ENCODE measurements at regions of chr18 and their contacts with region 1.

Region 1: GRCh38 chr18:27005589-27005988 is 140.1 kb upstream of the AQP4 start:
- H3K4me3 Mint-ChIP-seq: no peak overlapping the region
- H3K27ac Mint-ChIP-seq: no peak overlapping the region
- H3K4me1 Mint-ChIP-seq: no peaks in the 10 kb centered on the region
- H3K27me3 Mint-ChIP-seq: peaks cover 2% of the 10 kb centered on the region

Region 2: GRCh38 chr18:26621161-26622026 is 384.2 kb before region 1 on chr18:
- intact Hi-C with region 1: loop called (anchors 10 kb)
- H3K4me3 Mint-ChIP-seq: no peak overlapping the region
- H3K27ac Mint-ChIP-seq: no peak overlapping the region
- H3K4me1 Mint-ChIP-seq: peaks cover 12% of the 10 kb centered on the region
- H3K27me3 Mint-ChIP-seq: no peaks in the 10 kb centered on the region

Region 3: GRCh38 chr18:26919627-26920026 is 86.0 kb before region 1 on chr18:
- intact Hi-C with region 1: no loop called
- H3K4me3 Mint-ChIP-seq: no peak overlapping the region
- H3K27ac Mint-ChIP-seq: no peak overlapping the region
- H3K4me1 Mint-ChIP-seq: no peaks in the 10 kb centered on the region
- H3K27me3 Mint-ChIP-seq: peaks cover under 1% of the 10 kb centered on the region

Region 4: GRCh38 chr18:26941584-26941983 is 64.0 kb before region 1 on chr18:
- intact Hi-C with region 1: no loop called
- H3K4me3 Mint-ChIP-seq: no peak overlapping the region
- H3K27ac Mint-ChIP-seq: no peak overlapping the region
- H3K4me1 Mint-ChIP-seq: no peaks in the 10 kb centered on the region
- H3K27me3 Mint-ChIP-seq: no peaks in the 10 kb centered on the region

Region 5: DNA sequence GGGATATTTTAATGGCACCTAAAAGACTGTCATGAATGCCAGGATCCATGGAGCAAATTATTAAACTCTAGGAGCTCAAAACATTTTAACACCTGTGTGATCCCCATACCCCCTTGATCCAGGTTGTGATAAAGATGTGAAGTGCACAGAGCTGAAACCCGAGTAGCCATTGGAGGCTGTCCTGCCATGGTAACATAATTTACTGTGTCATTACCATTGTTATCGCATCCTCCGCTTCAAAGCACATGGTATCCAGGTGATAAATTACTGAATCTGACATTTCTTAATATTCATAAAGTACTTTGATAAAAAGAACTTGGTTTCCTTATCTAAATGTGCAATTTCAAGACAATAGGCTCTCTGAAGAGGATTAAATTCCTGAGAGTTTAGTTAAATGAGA is 70.2 kb after region 1 on chr18:
- intact Hi-C with region 1: no loop called
- H3K4me3 Mint-ChIP-seq: no peak overlapping the region
- H3K27ac Mint-ChIP-seq: no peak overlapping the region
- H3K4me1 Mint-ChIP-seq: no peaks in the 10 kb centered on the region
- H3K27me3 Mint-ChIP-seq: no peaks in the 10 kb centered on the region